ENCODE measurements at regions of chr16 and their contacts with region 1.

Region 1: DNA sequence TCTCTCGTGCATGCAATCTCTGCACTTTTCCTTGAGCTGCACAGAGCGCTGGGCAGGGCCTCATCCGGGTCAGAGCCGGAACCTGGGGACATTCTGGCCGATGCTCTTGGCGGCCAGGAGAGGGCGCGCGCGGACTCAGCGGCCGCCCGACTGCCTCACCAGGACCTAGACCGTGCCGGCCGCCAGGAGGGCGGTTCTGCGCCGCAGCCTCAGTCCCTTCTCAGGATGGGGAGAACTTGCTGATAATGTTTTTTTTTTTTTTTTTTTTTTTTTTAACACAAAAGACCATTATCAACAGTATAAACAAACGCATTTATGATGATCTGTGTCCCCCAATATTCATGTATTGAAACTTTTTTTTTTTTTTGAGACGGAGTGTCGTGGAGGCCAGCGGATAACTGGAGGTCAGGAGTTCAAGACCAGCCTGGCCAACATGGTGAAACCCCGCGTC is 8.1 kb upstream of the FLYWCH2 start:
- DNase-seq: peak; percentile 85
- ATAC-seq: peak; percentile 99

Region 2: GRCh38 chr16:2919511-2920255 is 44.7 kb after region 1 on chr16:
- intact Hi-C with region 1: loop called (anchors 5 to 10 kb)
- DNase-seq: no peak
- ATAC-seq: peak; percentile 61 to 87

Region 3: DNA sequence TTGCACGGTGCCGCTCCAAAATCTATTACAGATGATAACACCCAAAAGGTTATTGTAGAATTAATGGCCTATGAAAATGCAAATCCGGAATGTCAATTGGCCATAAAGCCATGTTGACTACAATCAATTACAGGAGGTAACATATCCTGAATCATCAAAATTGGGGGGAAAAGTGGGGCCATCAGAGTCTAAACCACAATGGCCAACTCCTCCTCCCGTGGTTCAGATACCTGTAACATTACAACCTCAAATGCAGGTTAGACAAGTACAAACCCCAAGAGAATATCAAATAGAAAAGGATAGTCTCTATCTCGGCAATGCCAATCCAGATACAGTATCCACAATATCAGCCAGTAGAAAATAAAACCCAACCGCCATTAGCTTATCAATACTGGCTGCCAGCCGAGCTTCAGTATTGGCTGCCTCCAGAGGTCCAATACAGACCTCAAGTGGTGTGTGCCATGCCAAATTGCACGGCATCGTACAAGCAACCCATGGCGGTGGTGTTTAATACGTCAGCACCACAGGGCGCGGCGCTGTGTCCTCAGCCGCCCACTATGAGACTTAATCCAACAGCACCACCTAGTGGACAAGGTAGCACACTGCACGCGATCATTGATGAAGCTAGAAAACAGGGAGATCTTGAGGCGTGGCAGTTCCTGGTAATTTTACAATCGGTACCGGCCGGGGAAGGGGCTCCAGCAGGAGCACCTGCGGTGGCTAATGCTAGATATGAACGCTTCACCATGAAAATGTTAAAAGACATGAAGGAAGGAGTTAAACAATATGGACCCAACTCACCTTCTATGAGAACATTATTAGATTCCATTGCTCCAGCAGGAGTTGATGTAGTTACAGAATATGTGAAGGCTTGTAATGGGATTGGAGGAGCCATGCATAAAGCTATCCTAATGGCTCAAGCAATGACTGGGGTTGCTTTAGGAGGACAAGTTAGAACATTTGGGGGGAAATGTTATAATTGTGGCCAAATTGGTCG is 52.0 kb after region 1 on chr16:
- intact Hi-C with region 1: loop called (anchors 5 to 10 kb)
- DNase-seq: peak; percentile 90
- ATAC-seq: peak; percentile 89 to 93